Activated CD4-positive, alpha-beta T cell treated with anti-CD3 and anti-CD28 coated beads, Interleukin-2, amount 10 ng/mL, durations not matched to agents 24 days and 14 days (primary cell): ENCODE measurements at regions of chr2 and their contacts with region 1.

Region 1: DNA sequence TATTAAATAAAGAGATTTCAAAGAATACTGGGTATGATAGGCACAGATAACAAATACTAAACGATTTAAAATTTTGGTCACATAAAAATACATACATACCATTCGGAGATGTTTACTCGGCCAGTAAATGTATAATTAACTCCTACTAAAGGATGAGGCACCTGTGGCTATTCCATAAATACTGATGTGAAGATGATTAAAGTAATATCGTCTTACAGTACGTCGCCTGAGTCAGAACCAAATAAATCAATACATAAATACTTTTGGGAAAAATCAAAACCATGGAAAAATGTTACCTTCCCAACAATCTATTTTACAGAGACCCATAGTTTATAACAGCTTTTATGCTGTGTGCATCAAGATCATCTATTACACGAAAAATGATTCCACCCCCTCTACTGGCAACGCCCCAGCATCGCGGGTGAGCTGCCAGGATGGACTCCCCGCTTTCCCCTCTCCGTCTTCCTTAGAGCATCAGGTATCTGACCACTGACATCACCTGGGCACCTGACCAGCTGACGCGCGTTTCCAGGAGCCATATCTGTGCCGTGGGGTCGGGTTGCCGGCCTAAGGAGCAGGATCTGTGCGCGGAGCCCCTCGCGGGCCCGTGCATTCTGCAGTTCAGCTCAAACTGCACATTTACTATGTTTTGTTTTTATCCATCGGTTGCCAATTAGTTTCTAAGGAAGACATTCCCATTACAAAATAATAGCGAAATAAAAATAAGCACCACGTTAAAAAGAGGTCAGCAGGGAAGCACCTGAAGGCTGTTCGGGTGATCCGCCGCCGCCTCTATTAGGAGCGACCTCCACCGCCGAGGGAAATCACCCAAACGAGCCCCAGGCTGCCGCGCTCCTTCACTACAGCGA is 901 bp downstream of the ICA1L start:
- DNase-seq: peak; percentile 90
- H3K4me3 Mint-ChIP-seq: peak overlapping the region; percentile 88
- H3K27ac Mint-ChIP-seq: peak overlapping the region; percentile 87
- H3K4me1 Mint-ChIP-seq: peaks cover 7% of the 10 kb centered on the region
- H3K27me3 Mint-ChIP-seq: no peaks in the 10 kb centered on the region

Region 2: DNA sequence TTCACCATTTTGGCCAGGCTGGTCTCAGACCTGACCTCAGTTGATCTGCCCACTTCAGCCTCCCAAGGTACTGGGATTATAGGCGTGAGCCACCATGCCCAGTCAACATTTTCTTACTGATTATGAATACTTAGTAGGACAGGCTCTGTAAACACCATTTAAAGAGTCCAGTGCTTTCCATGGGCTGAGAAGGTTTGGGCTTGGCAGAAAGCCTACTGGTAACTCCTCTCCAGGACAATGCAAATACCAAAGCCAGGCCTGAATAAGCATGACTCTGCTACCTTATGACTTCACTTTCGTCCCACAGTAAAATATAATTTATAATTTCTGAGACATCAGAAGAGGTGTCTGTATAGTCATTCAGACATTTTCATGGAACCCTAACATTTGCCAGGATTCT is 296.1 kb before region 1 on chr2:
- intact Hi-C with region 1: loop called (anchors 1 kb)
- DNase-seq: peak; percentile 47
- H3K4me3 Mint-ChIP-seq: no peak overlapping the region
- H3K27ac Mint-ChIP-seq: no peak overlapping the region
- H3K4me1 Mint-ChIP-seq: no peaks in the 10 kb centered on the region
- H3K27me3 Mint-ChIP-seq: no peaks in the 10 kb centered on the region

Region 3: DNA sequence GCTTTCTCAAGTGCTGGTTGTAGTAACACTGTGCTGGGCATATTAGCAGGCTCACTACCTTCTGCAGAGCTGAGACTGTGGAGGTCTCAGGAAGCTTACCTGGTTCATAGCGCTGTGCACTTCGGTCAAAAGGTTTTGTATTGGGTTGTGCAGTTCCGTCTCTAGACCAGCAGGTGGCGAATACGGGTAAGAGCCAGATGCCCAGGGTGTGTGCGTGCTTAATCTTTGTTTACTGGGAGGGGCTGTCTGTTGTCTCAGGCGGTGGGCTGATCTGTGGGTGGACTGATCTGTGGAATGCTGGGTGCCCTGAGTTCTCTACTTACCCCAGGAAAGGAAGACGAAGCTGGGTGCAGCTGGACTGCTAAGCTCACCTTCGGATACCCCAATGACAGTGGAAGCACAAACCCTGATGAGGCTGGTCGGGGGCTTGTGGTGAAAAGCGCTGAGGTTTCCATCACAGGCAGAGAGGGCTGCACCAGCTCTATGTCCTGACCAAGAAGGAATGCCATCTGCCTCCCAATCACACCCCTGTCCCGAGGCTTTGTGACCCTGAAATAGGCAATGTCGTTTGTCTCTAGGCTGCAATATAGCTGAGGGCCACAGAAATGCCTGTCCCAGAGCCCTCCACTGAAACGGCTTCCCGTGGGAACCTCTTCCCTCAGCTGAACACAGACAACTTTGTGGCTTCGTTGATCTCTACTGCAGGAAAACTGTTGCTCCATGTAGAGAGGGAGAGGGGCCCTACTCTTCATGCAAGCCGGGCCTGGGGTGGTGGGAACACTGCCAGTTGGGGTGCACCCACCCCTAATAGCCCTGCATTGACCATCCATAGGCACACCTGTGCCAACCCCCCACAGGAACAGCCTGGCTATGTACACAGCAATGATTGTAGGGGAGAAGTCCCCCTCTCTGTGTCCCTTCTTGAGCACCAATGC is 281.8 kb before region 1 on chr2:
- intact Hi-C with region 1: loop called (anchors 1 kb)
- DNase-seq: peak; percentile 89
- H3K4me3 Mint-ChIP-seq: no peak overlapping the region
- H3K27ac Mint-ChIP-seq: peak overlapping the region; percentile 38
- H3K4me1 Mint-ChIP-seq: peaks cover 10% of the 10 kb centered on the region
- H3K27me3 Mint-ChIP-seq: peaks cover 3% of the 10 kb centered on the region

Region 4: DNA sequence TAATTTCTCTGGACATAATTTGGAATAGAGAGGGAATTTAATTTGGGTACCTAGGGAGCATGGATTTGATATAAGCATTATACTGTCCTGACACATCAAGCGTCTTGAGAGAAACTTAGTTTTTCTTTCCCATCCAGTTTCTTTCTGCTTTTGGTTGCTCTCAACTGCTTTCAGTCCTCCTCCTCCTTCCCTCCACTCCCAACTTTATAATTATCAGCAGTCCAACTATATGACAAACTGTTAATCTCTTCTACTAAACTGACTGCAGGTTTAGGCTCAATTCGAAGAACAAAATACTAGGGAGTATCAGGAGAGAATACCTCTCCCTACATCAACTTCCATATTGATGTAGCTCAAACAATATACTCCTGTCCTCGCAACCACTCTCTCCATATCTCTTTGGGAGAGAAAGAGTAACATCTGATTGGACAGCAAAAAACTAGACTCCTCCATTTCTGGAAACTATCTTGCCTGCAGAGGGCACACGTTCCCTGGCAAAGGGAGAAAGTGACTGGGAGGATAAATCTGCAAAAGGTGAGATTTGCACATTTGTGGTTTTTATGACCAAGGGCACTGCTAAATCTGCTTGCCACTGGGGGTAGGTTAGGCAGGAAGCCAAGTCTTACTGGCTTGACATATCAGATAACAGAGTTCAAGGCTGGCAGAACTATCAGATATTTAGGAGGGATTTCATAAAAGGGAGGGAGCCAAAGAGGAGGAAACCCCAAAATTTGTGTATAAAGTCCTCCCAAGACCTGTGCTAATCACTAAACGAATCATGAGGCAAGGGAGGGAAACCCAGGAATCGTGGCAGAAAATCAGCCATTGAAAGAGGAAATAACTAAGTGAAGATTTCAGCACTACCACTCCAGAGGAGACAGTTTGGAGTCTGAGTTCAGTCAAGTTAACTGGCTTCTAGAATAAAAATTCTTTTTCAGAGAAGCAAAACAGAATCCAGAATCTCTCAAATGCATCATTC is 39.1 kb before region 1 on chr2:
- intact Hi-C with region 1: loop called (anchors 1 kb)
- DNase-seq: peak; percentile 81
- H3K4me3 Mint-ChIP-seq: no peak overlapping the region
- H3K27ac Mint-ChIP-seq: no peak overlapping the region
- H3K4me1 Mint-ChIP-seq: peaks cover 9% of the 10 kb centered on the region
- H3K27me3 Mint-ChIP-seq: no peaks in the 10 kb centered on the region

Region 5: GRCh38 chr2:202911512-202912341 is 41.1 kb after region 1 on chr2 and contains the starts of genes CARF and WDR12:
- intact Hi-C with region 1: loop called (anchors 1 kb)
- DNase-seq: peak; percentile 97
- H3K4me3 Mint-ChIP-seq: peak within 1 kb of the TSS; percentile 99
- H3K27ac Mint-ChIP-seq: peak within 1 kb of the TSS; percentile 95
- H3K4me1 Mint-ChIP-seq: peaks cover 24% of the 10 kb centered on the region
- H3K27me3 Mint-ChIP-seq: no peaks in the 10 kb centered on the region
- total RNA-seq, gene CARF: 3.9 and 4.3 TPM in 2 replicates
- total RNA-seq, gene WDR12: 161 and 167 TPM in 2 replicates

Region 6: GRCh38 chr2:203014456-203015199 is 144.0 kb after region 1 on chr2 and contains the start of gene NBEAL1:
- intact Hi-C with region 1: loop called (anchors 2 kb)
- DNase-seq: peak; percentile 99
- H3K4me3 Mint-ChIP-seq: peak within 1 kb of the TSS; percentile 98
- H3K27ac Mint-ChIP-seq: peak within 1 kb of the TSS; percentile 77
- H3K4me1 Mint-ChIP-seq: peaks cover 31% of the 10 kb centered on the region
- H3K27me3 Mint-ChIP-seq: peaks cover 15% of the 10 kb centered on the region
- total RNA-seq, gene NBEAL1: 7.2 and 9.5 TPM in 2 replicates

Region 7: DNA sequence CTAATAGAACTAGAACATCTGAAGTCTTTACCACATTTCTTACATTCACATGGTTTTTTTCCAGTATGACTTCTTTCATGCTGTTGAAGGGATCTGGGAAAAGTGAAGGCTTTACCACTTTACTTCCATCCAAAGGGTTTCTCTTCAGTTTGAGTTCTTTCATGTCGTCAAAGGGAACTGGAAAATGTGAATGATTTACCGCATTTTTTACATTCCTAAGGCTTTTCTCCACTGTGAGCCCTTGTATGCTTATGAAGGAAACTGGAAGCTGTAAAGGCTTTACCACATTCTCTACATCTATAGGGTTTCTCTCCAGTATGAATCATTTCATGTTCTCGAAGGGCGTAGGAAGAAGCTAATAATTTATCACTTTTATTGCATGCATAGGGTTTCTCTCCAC is 190.7 kb after region 1 on chr2:
- intact Hi-C with region 1: no loop called
- DNase-seq: no peak
- H3K4me3 Mint-ChIP-seq: no peak overlapping the region
- H3K27ac Mint-ChIP-seq: no peak overlapping the region
- H3K4me1 Mint-ChIP-seq: no peaks in the 10 kb centered on the region
- H3K27me3 Mint-ChIP-seq: no peaks in the 10 kb centered on the region